Colonic mucosa (tissue), 4 donors: ENCODE measurements at regions of chr15 and their contacts with region 1.

Region 1: DNA sequence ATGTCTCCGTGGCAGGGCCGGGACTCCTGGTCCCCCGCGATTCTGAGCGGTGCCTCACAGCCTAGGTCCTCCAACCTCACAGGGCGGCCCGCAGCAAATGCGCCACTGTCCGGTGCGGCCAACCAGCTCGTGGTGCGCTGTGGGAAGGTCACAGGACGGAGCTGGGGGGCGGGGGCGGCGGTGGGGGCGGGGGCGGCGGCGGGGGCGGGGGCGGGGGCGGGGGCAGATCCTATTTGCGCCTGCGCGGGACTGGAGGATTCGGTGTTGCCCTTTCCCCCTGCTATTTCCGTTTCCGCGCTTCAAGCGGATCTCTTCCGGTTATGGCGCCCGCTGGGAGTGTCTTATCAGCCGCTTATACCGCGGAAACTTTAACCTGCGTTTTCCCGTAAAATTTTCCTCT is 106.7 kb upstream of the SNRPN start:
- DNase-seq: no peak
- H3K4me3 ChIP-seq: no peak overlapping the region
- H3K27ac ChIP-seq: no peak overlapping the region
- H3K4me1 ChIP-seq: no peaks in the 10 kb centered on the region
- H3K27me3 ChIP-seq: no peaks in the 10 kb centered on the region
- CTCF ChIP-seq: no peak

Region 2: DNA sequence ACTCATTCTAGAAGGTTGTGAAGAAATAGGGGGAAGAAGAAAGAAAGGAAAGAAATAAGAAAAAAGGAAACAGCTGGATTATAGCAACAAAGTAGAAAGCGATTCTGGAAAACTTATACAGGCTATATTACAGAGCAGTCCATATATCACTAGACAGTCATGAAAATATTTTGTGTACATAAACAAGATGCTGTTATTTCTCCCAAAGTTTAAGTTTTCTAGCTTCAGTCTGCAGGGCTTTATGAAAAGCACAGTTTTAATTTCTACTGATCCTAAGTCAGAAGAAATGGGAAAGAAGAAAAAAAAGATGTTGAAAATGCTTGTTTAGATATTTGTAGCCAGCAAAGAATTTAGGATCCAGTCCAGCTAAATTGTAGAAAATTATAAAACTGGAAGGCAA is 839.6 kb before region 1 on chr15:
- intact Hi-C with region 1: loop called (anchors 10 kb)
- DNase-seq: no peak
- H3K4me3 ChIP-seq: no peak overlapping the region
- H3K27ac ChIP-seq: no peak overlapping the region
- H3K4me1 ChIP-seq: no peaks in the 10 kb centered on the region
- H3K27me3 ChIP-seq: no peaks in the 10 kb centered on the region
- CTCF ChIP-seq: no peak

Region 3: GRCh38 chr15:24786347-24786746 is 61.7 kb before region 1 on chr15:
- intact Hi-C with region 1: loop called (anchors 10 kb)
- DNase-seq: no peak
- H3K4me3 ChIP-seq: no peak overlapping the region
- H3K27ac ChIP-seq: no peak overlapping the region
- H3K4me1 ChIP-seq: no peaks in the 10 kb centered on the region
- H3K27me3 ChIP-seq: no peaks in the 10 kb centered on the region
- CTCF ChIP-seq: no peak